ENCODE measurements at regions of chr19 and their contacts with region 1.

Region 1: GRCh38 chr19:2168619-2169424 is 5.1 kb downstream of the DOT1L start:
- DNase-seq: peak; percentile 98
- ATAC-seq: peak; percentile 84
- H3K4me3 ChIP-seq: peak overlapping the region; percentile 34 to 53
- H3K27ac ChIP-seq: peak overlapping the region; percentile 99
- H3K4me1 ChIP-seq: peaks cover 55 to 73% of the 10 kb centered on the region in 2 experiments
- H3K27me3 ChIP-seq: no peaks in the 10 kb centered on the region
- CTCF ChIP-seq: no peak
- POLR2A ChIP-seq: no peak
- RAD21 ChIP-seq: peak; percentile 20

Region 2: DNA sequence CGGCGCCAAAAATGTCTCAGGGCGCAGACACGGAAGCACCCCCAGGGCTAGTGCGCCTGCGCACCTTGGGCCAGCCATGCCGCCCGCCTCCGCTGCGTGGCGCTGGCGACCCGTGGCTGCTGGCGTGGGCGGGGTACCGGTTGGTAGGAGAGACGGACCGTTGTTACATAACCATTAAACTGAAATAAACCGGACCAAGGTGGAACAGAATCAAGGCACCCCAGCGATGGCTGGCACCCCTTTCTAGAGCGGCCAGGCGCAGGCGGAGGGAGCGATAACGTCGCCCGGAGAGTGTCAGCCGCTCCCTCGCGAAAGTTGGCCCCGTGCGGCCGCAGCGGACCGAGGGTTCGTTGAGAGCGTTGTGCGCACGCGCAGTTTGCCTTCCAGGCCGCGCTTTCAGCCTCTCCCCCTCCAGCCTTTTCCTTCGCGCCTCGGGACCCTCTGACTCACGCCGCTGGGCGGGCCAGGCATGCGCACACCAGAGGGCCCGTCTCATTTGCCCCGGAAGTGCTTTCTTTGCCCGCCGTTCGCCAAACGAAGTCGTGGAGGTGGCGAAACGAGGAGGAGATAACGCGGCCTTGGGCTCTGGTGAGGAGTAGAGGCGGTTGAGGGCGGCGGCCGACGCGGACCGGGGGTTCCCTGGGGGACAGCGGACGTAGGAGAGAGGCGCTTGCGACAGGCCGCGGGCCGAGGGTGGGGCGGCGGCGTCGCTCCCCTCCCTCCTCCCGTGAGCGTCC is 67.7 kb after region 1 on chr19 and contains the starts of genes PLEKHJ1 and SF3A2:
- CTCF ChIA-PET with region 1: no interaction called
- POLR2A ChIA-PET with region 1: no interaction called
- RAD21 ChIA-PET with region 1: no interaction called
- intact Hi-C with region 1: loop called (anchors 5 kb)
- DNase-seq: peak; percentile 94
- ATAC-seq: peak; percentile 77
- H3K4me3 ChIP-seq: peak within 1 kb of the TSS; percentile 83 to 92
- H3K27ac ChIP-seq: peak within 1 kb of the TSS; percentile 95
- H3K4me1 ChIP-seq: peaks cover 17 to 49% of the 10 kb centered on the region in 2 experiments; a peak in 3 of 4 replicates
- H3K27me3 ChIP-seq: no peaks in the 10 kb centered on the region
- CTCF ChIP-seq: peak; percentile 87 to 98 (median 96)
- POLR2A ChIP-seq: peak; percentile 82
- RAD21 ChIP-seq: peak; percentile 97
- total RNA-seq, gene PLEKHJ1: 88.2 TPM
- total RNA-seq, gene SF3A2: 166 TPM

Region 3: DNA sequence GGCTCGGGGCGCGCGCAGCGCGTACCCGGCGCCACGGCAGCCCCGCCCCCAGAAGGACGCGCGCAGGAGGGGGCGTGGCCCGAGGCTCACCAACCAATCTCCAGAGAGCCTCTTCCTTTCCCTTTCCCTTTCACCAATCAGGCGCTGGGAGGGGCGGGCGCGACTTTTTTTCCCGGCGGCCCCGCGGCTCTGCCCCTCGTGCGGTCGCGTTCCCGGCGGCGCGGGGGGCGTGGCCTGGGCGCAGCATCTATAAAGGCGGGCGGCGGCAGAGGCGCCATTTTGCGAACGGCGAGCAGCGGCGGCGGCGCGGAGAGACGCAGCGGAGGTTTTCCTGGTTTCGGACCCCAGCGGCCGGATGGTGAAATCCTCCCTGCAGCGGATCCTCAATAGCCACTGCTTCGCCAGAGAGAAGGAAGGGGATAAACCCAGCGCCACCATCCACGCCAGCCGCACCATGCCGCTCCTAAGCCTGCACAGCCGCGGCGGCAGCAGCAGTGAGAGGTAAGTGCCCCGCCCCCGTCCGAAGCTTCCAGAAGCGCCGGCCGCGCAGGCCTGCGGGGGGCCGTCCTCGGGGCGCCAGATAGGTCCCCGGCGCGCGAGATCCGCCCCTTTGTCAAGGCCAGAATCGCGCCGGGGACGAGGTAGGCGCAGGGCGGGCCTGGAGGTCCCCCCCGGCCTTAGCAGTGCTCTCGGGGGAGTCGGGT is 100.6 kb after region 1 on chr19:
- CTCF ChIA-PET with region 1: no interaction called
- POLR2A ChIA-PET with region 1: interaction called, 3 read pairs
- RAD21 ChIA-PET with region 1: no interaction called
- intact Hi-C with region 1: loop called (anchors 5 kb)
- DNase-seq: peak; percentile 85
- ATAC-seq: peak; percentile 87
- H3K4me3 ChIP-seq: peak overlapping the region; percentile 97 to 98
- H3K27ac ChIP-seq: peak overlapping the region; percentile 98
- H3K4me1 ChIP-seq: peaks cover 22 to 48% of the 10 kb centered on the region in 2 experiments
- H3K27me3 ChIP-seq: no peaks in the 10 kb centered on the region
- CTCF ChIP-seq: peak in 1 of 3 experiments; percentile 7; a peak in 1 of 6 replicates
- POLR2A ChIP-seq: peak; percentile 96
- RAD21 ChIP-seq: no peak

Region 4: GRCh38 chr19:2345794-2346663 is 177.2 kb after region 1 on chr19:
- CTCF ChIA-PET with region 1: no interaction called
- POLR2A ChIA-PET with region 1: no interaction called
- RAD21 ChIA-PET with region 1: no interaction called
- intact Hi-C with region 1: no loop called
- DNase-seq: no peak
- ATAC-seq: peak; percentile 76
- H3K4me3 ChIP-seq: no peak overlapping the region
- H3K27ac ChIP-seq: no peak overlapping the region
- H3K4me1 ChIP-seq: peaks cover 5 to 8% of the 10 kb centered on the region in 2 experiments; a peak in 3 of 4 replicates
- H3K27me3 ChIP-seq: no peaks in the 10 kb centered on the region
- CTCF ChIP-seq: no peak
- POLR2A ChIP-seq: no peak
- RAD21 ChIP-seq: no peak

Region 5: DNA sequence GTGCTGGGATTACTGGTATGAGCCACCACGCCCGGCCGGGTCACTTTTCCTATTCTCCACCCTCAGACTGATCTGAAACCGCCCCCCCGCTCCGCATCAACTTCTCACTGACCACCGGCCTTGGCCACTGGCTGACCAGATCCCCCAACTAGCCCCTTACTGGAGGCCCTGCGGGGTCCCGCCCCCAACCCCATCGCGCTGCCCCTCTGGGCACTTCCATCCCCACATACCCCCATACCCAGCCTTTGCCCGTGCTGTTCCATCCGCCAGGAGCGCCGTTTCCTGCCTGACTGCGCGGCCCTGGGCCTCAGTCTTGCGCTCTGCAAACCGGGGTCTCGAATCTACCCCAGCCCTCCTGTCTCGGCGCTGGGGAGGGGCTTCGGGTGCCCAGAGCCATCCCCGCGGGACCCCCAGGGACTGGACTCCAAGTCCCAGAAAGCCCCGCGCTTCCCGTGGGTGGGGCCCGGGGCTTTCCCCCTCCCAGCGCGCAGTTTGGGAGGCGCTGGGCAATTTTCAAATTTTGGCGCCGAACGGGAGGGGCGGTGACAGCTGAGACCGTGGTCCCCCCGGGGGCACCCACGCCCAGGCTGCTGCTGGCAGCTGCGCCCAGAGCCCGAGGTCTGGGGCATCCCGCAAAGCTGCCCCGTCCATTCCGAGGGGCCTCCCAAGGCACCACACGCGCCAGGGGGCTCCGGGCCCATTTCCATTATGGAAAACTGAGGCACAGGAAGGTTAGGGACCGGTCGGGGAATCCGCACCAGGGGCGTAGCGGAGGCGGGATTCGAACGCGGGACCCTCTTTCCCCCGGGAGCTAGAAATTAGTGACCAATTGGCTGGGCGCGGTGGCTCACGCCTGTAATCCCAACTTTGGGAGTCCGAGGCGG is 293.2 kb after region 1 on chr19:
- CTCF ChIA-PET with region 1: no interaction called
- POLR2A ChIA-PET with region 1: no interaction called
- RAD21 ChIA-PET with region 1: no interaction called
- intact Hi-C with region 1: loop called (anchors 10 kb)
- DNase-seq: peak; percentile 60
- ATAC-seq: peak; percentile 73
- H3K4me3 ChIP-seq: peak overlapping the region; percentile 69 to 74
- H3K27ac ChIP-seq: peak overlapping the region; percentile 88
- H3K4me1 ChIP-seq: peaks cover 9 to 53% of the 10 kb centered on the region in 2 experiments; a peak in 3 of 4 replicates
- H3K27me3 ChIP-seq: no peaks in the 10 kb centered on the region
- CTCF ChIP-seq: peak in 2 of 3 experiments; percentile 24 to 30; a peak in 4 of 6 replicates
- POLR2A ChIP-seq: no peak
- RAD21 ChIP-seq: no peak